ENCODE measurements at regions of chr3 and their contacts with region 1.

Region 1: GRCh38 chr3:192188218-192188835 is 539.0 kb downstream of the FGF12 start:
- DNase-seq: peak; percentile 71
- H3K4me3 Mint-ChIP-seq: no peak overlapping the region
- H3K27ac Mint-ChIP-seq: no peak overlapping the region
- H3K4me1 Mint-ChIP-seq: peaks cover 6% of the 10 kb centered on the region
- H3K27me3 Mint-ChIP-seq: no peaks in the 10 kb centered on the region
- CTCF ChIP-seq: peak; percentile 68

Region 2: DNA sequence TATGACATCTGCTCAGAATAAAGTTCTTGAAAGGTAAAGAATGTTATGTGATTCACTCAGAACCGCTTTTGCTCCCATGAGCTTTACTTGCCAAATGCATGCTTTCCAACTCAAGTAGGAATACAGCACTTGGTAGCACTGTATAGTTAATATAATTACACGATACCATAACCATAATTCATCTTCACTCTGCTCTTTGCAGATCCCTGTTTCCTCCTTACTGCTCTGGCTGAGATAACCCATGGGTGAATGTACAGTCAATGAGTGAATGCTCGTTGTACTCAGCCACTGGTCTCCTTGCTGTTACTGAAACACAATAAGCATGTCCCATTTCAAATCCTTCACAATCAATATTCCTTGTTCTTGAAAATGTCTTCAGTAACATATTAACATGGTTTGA is 10.9 kb before region 1 on chr3:
- CTCF ChIA-PET with region 1: interaction called, 15 read pairs
- POLR2A ChIA-PET with region 1: interaction called, 3 read pairs
- intact Hi-C with region 1: no loop called
- DNase-seq: no peak
- H3K4me3 Mint-ChIP-seq: no peak overlapping the region
- H3K27ac Mint-ChIP-seq: no peak overlapping the region
- H3K4me1 Mint-ChIP-seq: no peaks in the 10 kb centered on the region
- H3K27me3 Mint-ChIP-seq: no peaks in the 10 kb centered on the region
- CTCF ChIP-seq: no peak

Region 3: DNA sequence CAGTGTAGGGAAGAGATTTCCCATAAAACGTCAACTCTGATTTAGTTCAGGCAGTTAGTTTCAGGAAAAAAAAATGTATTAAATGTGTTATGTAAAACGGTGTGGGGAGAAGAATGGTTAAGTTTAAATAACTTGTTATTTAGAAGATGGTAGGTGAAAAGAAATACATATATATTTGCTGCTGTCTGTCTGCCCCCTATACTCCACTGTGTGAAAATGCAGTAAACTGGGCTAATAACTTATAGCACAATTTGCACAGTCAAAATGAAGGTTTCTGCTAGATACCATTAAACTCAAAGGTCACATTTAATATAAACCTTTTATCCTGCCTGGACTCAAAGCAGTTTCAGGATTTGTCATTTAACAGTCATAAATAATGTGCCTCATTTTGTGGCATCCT is 24.0 kb after region 1 on chr3:
- CTCF ChIA-PET with region 1: interaction called, 17 read pairs
- POLR2A ChIA-PET with region 1: interaction called, 3 read pairs
- intact Hi-C with region 1: no loop called
- DNase-seq: no peak
- H3K4me3 Mint-ChIP-seq: no peak overlapping the region
- H3K27ac Mint-ChIP-seq: no peak overlapping the region
- H3K4me1 Mint-ChIP-seq: peaks cover 4% of the 10 kb centered on the region
- H3K27me3 Mint-ChIP-seq: no peaks in the 10 kb centered on the region
- CTCF ChIP-seq: no peak